PC-3 (cell line): ENCODE measurements at regions of chr14 and their contacts with region 1.

Region 1: GRCh38 chr14:67251573-67252226 is 10.5 kb downstream of the PALS1 start:
- DNase-seq: peak; percentile 72
- ATAC-seq: peak; percentile 69
- H3K4me3 ChIP-seq: no peak overlapping the region
- H3K27ac ChIP-seq: peak overlapping the region; percentile 4; the same call in 1 of the 2 replicates
- H3K4me1 ChIP-seq: peaks cover 46% of the 10 kb centered on the region
- H3K27me3 ChIP-seq: no peaks in the 10 kb centered on the region
- CTCF ChIP-seq: no peak

Region 2: DNA sequence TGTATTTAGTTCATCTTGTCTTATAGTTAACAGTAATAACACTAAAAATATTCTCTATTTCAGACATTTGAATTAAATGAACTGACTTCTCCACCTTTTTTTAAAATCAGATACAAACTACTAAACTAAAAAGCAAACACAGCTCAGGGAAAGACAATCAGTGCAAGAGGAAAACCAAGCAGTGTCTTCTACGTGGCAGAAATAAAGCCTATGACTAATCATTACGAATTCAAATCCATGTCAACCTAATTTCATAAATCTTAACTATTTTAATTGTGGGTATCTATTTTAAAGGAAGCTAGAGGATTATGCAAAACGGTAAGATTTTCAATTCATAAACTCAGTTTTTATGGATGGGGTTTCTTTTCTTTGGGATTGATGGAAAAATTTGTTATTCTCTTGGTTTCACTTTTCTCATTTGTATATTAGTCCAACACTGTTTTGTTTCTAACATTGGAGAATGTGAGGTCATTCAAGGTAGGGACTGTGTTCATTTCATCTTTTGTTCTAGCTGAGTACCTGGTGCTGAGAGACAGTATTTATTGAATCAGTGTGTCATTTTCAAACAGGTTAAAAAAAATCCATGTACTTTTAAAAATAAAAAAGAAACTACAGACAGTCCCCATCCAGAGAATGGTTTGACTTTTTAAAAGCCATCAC is 23.2 kb before region 1 on chr14:
- CTCF ChIA-PET with region 1: interaction called, 3 read pairs
- POLR2A ChIA-PET with region 1: interaction called, 12 read pairs
- intact Hi-C with region 1: no loop called
- DNase-seq: peak; percentile 67
- ATAC-seq: peak; percentile 92
- H3K4me3 ChIP-seq: peak overlapping the region; percentile 54
- H3K27ac ChIP-seq: peak overlapping the region; percentile 26
- H3K4me1 ChIP-seq: peaks cover 8% of the 10 kb centered on the region
- H3K27me3 ChIP-seq: no peaks in the 10 kb centered on the region
- CTCF ChIP-seq: no peak

Region 3: DNA sequence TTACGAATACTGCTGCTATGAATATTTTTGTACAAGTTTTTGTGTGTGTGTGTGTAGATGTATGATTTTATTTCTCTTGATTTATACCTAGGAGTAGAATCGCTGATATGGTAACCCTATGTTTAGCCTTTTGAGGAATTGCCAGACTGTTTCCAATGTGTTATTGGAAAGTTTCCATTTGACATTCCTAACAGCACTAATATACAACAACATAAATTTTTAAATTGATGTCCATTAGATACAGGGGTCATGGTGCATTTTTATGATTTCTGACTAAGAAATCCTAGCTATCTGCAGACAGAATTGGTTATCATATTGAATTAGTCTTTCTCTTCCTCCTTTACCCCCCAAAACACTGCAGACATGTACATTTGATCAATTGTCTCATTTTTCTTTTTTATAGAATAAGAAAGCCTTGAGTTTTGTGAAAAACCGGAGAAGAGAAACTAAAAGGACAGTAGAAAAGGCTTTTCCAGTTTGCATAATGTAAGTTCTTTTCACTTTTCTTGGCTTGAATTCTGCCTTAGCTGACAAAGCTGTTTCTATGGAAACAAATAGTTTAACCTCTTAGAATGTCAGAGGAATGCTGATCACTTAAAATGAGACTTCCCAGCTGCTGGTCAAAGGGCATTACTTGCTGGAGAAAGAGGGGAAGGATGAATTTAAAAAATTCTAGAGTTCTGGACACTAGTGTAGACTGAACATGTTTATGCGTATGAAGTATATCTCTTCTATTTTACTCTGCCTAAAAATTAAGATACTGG is 17.8 kb after region 1 on chr14:
- CTCF ChIA-PET with region 1: no interaction called
- POLR2A ChIA-PET with region 1: interaction called, 21 read pairs
- intact Hi-C with region 1: loop called (anchors 2 kb)
- DNase-seq: no peak
- ATAC-seq: no peak
- H3K4me3 ChIP-seq: no peak overlapping the region
- H3K27ac ChIP-seq: no peak overlapping the region
- H3K4me1 ChIP-seq: no peaks in the 10 kb centered on the region
- H3K27me3 ChIP-seq: no peaks in the 10 kb centered on the region
- CTCF ChIP-seq: no peak

Region 4: GRCh38 chr14:67285876-67286452 is 34.3 kb after region 1 on chr14:
- CTCF ChIA-PET with region 1: interaction called, 6 read pairs
- POLR2A ChIA-PET with region 1: no interaction called
- intact Hi-C with region 1: loop called (anchors 1 kb)
- DNase-seq: peak; percentile 86
- ATAC-seq: peak; percentile 52
- H3K4me3 ChIP-seq: no peak overlapping the region
- H3K27ac ChIP-seq: no peak overlapping the region
- H3K4me1 ChIP-seq: no peaks in the 10 kb centered on the region
- H3K27me3 ChIP-seq: no peaks in the 10 kb centered on the region
- CTCF ChIP-seq: peak; percentile 81

Region 5: DNA sequence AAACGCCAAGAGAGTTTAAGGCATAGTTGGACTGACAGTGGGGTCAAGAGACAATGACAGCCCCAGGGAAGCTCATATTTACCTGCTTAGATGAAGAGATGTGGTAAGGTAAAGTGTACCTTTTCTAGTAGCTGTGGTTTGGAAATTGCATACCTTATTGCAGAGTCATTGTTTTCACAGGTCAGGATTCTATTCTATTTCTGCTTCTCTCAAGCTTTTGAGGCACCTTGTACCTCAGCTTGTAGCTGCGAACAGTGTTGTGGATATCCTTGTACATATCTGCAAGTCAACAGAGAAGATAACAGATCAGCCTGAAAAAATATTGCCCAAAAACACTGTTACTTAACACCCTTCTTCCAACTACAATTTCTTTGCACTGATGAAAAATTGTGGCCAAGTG is 60.2 kb after region 1 on chr14:
- CTCF ChIA-PET with region 1: no interaction called
- POLR2A ChIA-PET with region 1: no interaction called
- intact Hi-C with region 1: no loop called
- DNase-seq: peak; percentile 88
- ATAC-seq: peak; percentile 74
- H3K4me3 ChIP-seq: no peak overlapping the region
- H3K27ac ChIP-seq: no peak overlapping the region
- H3K4me1 ChIP-seq: peaks cover 29% of the 10 kb centered on the region
- H3K27me3 ChIP-seq: no peaks in the 10 kb centered on the region
- CTCF ChIP-seq: no peak